GM12878 (cell line): ENCODE measurements at regions of chr6 and their contacts with region 1.

Region 1: DNA sequence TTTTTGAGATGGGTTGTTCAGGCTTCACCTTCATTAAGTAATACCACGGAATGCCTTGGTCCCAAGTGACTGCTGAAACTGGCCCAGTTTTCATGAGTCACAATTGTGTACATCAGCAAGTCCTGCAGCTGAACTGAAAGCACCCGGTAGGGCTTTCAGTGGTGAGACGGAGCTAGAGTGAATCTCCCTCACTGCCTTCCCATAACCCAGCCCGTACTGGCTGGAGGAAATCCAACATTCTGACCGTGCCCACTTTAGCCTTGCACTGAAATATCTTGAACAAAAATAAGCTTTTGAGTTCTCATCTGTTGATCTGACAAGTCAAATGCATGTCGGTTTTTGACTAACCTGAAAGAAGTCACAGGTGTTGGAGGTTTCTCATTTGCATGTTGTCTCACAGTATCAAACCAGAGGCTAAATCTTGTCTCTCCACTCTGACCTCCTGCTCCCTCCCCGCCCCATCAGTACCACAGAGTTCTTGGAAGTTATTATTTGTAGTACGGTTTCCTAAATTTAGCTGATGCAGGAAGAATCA is 35.9 kb downstream of the DUSP22 start:
- DNase-seq: peak; percentile 100
- ATAC-seq: peak; percentile 76
- H3K4me3 ChIP-seq: peak overlapping the region; percentile 37
- H3K27ac ChIP-seq: peak overlapping the region; percentile 97
- H3K4me1 ChIP-seq: peaks cover 85% of the 10 kb centered on the region
- H3K27me3 ChIP-seq: no peaks in the 10 kb centered on the region
- CTCF ChIP-seq: no peak
- EP300 ChIP-seq: peak; percentile 87 to 96
- POLR2A ChIP-seq: no peak
- RAD21 ChIP-seq: 0 out of 2 replicates have a peak, but pooled peaks have one; percentile 32

Region 2: GRCh38 chr6:259901-260508 is 68.2 kb before region 1 on chr6:
- CTCF ChIA-PET with region 1: interaction called, 7 read pairs
- POLR2A ChIA-PET with region 1: interaction called, 4 read pairs
- RAD21 ChIA-PET with region 1: interaction called, 4 read pairs
- SMC1A ChIA-PET with region 1: interaction called, 14 read pairs
- in situ Hi-C with region 1: no loop called
- intact Hi-C with region 1: no loop called
- DNase-seq: peak; percentile 77
- ATAC-seq: peak; percentile 91
- H3K4me3 ChIP-seq: peak overlapping the region; percentile 20
- H3K27ac ChIP-seq: peak overlapping the region; percentile 82
- H3K4me1 ChIP-seq: peaks cover 37% of the 10 kb centered on the region
- H3K27me3 ChIP-seq: no peaks in the 10 kb centered on the region
- CTCF ChIP-seq: no peak
- EP300 ChIP-seq: no peak
- POLR2A ChIP-seq: no peak
- RAD21 ChIP-seq: no peak

Region 3: DNA sequence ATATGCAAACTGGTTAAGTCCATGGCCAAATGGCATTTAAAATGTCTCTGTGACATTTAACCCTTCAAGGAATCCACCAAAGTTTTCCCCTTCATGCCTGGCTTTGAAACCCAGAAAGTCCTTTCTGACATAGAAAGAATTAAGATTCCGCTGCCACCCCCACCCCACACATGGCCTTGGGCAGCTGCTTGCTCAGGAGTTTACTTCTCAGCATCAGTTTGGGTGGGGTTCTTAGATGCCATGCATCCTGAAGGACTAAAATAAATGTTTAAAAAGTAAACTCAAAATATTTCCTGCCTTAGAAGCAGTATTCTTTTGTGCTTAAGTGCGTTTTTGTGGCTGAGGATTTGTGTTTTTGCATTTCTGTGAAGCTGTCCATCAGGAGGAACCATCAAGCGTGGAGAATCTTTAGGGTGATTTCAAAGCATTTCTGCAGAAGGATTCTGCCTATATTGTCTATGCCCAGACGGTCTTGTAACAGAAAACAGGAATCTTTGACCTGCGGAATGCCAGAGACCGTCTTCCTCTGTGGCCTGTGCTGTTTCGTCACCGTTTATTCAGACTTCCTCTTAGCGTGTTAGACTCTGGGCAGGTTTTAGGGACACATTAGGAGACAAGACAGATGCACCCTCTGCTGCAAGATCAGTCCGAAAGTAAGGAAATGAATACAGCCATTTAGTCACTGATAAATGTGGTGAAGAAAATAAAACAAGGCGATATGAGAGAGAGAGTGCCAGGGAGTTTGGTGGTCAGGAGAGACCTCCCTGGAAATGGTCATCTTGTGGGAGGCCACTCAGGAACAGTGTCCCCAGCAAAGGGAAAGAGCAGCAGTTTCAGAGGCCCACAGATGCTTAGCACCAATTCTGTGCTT is 29.7 kb before region 1 on chr6:
- CTCF ChIA-PET with region 1: interaction called, 46 read pairs
- POLR2A ChIA-PET with region 1: interaction called, 67 read pairs
- RAD21 ChIA-PET with region 1: interaction called, 29 read pairs
- SMC1A ChIA-PET with region 1: interaction called, 56 read pairs
- in situ Hi-C with region 1: no loop called
- intact Hi-C with region 1: no loop called
- DNase-seq: no peak
- ATAC-seq: peak; percentile 32
- H3K4me3 ChIP-seq: peak overlapping the region; percentile 63
- H3K27ac ChIP-seq: peak overlapping the region; percentile 100
- H3K4me1 ChIP-seq: peaks cover 66% of the 10 kb centered on the region
- H3K27me3 ChIP-seq: no peaks in the 10 kb centered on the region
- CTCF ChIP-seq: no peak
- EP300 ChIP-seq: no peak
- POLR2A ChIP-seq: no peak
- RAD21 ChIP-seq: no peak

Region 4: DNA sequence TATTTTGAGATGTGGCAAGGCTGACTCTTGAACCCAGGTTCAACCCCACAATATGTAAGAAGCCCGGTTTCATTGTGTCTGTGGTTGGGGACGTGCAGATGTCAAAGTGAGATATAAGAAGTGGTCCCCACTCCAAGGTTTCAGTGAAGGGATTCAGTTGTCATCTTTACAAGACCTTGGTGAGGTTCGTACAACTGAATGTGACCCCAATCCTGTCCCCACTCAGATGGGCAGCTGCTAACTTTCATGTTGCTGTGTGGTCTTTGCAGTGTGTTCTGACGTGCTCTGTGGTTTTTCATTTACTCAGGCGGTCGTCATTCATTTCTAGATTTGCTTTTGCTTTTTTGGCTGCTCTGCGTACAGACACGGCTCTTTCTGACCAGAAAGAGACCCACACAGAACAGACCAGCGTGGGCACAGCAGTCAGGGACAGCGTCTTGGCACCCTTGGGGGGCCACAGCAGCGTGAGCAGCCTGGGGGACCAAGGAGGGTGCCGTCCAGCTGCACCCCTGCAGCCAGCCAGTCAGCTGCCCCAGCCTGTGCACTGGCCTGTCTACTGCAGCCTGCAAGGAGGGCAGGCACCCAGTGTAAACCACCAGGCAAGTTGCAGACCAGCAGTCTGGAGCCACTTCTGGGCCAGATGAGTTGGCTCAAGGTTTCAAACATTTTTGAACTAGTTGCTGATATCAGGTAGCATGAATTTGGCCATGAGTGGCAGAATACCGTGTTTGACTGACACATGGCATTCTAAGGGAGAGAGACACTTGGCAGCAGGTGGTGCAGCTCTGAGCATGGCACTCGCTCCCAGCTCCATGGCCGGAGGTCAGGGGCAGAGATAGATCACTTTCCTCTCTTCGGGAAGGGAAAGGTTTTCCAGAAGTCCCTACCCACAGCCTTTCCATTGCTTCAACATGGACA is 14.0 kb after region 1 on chr6:
- CTCF ChIA-PET with region 1: interaction called, 34 read pairs
- POLR2A ChIA-PET with region 1: interaction called, 150 read pairs
- RAD21 ChIA-PET with region 1: interaction called, 256 read pairs
- SMC1A ChIA-PET with region 1: interaction called, 707 read pairs
- in situ Hi-C with region 1: no loop called
- intact Hi-C with region 1: loop called (anchors 1 kb)
- DNase-seq: peak; percentile 92
- ATAC-seq: peak; percentile 72
- H3K4me3 ChIP-seq: peak overlapping the region; percentile 46; the same call in 1 of the 2 replicates
- H3K27ac ChIP-seq: peak overlapping the region; percentile 86
- H3K4me1 ChIP-seq: peaks cover 88% of the 10 kb centered on the region
- H3K27me3 ChIP-seq: no peaks in the 10 kb centered on the region
- CTCF ChIP-seq: no peak
- EP300 ChIP-seq: peak; percentile 99
- POLR2A ChIP-seq: no peak
- RAD21 ChIP-seq: 0 out of 2 replicates have a peak, but pooled peaks have one; percentile 34

Region 5: DNA sequence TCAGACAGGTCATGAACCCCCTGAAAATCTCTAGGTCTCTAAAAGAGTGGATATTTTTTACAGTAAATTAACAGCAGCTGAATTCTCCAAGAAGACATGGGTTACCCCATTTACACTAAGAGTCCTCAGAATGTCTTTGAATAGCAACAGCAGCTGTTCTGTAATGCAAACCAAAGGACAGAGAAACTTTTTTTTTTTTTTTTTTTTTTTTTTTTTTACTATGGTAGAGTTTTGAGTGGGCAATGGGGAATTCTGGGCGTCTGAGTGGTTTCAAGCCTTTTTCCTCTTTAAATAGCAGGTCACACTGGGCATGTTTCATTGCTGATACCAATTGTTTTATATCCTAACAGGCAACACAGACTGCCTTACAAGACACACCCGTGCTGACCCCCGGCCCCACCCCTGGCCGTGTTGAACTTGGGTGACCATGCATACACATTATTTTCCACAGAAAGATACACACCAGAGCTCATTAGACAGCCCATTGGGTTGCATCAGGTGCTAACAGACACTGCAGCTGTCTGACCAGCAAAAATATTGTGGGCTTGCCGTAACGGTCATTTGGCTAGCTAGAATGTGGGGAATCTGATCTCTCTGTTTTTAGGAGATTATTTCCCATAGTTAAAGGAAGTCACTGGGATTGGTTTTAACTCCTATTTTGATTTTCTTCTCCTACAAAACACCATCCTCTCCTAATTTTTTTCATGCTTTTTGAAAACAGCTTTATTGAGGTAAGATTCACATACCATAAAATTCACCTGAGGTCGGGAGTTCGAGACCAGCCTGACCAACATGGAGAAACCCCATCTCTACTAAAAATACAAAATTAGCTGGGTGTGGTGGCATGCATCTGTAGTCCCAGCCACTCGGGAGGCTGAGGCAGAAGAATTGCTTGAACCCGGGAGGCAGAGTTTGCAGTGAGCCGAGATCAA is 36.7 kb after region 1 on chr6:
- CTCF ChIA-PET with region 1: interaction called, 15 read pairs
- POLR2A ChIA-PET with region 1: interaction called, 10 read pairs
- RAD21 ChIA-PET with region 1: interaction called, 31 read pairs
- SMC1A ChIA-PET with region 1: interaction called, 230 read pairs
- in situ Hi-C with region 1: no loop called
- intact Hi-C with region 1: no loop called
- DNase-seq: peak; percentile 78
- ATAC-seq: peak; percentile 94
- H3K4me3 ChIP-seq: no peak overlapping the region
- H3K27ac ChIP-seq: peak overlapping the region; percentile 33
- H3K4me1 ChIP-seq: peaks cover 25% of the 10 kb centered on the region
- H3K27me3 ChIP-seq: no peaks in the 10 kb centered on the region
- CTCF ChIP-seq: no peak
- EP300 ChIP-seq: peak; percentile 37 to 88; a peak in 2 of 4 replicates
- POLR2A ChIP-seq: no peak
- RAD21 ChIP-seq: 0 out of 2 replicates have a peak, but pooled peaks have one; percentile 2

Region 6: GRCh38 chr6:399785-400534 is 71.8 kb after region 1 on chr6:
- CTCF ChIA-PET with region 1: interaction called, 5 read pairs
- POLR2A ChIA-PET with region 1: interaction called, 9 read pairs
- RAD21 ChIA-PET with region 1: interaction called, 95 read pairs
- SMC1A ChIA-PET with region 1: interaction called, 116 read pairs
- in situ Hi-C with region 1: no loop called
- intact Hi-C with region 1: no loop called
- DNase-seq: no peak
- ATAC-seq: peak; percentile 10
- H3K4me3 ChIP-seq: peak overlapping the region; percentile 61
- H3K27ac ChIP-seq: peak overlapping the region; percentile 39
- H3K4me1 ChIP-seq: peaks cover 35% of the 10 kb centered on the region
- H3K27me3 ChIP-seq: no peaks in the 10 kb centered on the region
- CTCF ChIP-seq: no peak
- EP300 ChIP-seq: peak; percentile 56 to 84; a peak in 2 of 4 replicates
- POLR2A ChIP-seq: peak; percentile 89
- RAD21 ChIP-seq: 0 out of 2 replicates have a peak, but pooled peaks have one; percentile 1